ENCODE measurements at regions of chr12 and their contacts with region 1.

Region 1: DNA sequence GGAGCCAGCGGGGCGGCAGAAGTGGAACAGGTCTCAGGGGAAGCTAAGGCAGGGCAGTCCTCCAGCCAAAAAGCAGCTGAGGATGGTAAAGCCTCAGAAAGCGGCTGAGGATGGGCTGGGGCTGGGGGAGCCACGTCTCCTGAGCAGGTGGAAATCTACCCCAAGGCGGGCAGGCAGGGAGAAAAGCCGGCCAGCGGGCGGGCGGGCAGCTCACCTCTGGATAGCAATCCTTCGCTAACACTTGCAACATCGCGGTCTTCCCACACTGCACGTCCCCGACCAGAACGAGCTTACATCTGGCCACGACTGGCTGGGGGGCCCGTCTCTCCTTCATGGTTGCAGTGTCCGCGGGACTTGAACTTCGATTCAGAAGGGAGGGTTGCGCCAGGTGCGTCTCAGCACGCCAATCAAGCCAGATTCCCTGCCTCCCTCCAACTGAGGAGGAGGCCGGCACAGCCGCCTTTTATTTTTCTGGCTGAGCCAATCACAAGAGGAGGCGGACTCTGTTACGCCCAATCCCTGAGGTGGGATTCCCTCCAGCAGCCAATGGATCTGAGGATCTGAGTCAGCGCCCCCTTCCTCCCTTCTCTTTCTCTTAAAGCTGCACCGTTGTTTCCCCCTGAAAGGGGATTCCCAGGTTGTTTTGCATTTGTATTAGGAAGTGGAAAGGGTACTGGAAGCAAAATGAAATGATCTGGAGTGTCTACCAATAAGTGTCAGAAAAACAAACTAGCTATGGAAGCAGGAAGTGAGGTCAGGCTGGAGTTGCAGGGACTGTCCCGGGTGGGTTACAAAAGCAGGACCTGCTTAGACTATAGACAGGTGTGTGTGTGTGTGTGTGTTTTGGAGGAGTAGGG is at the start of gene RND1:
- DNase-seq: peak; percentile 88
- ATAC-seq: peak; percentile 98
- H3K4me3 Mint-ChIP-seq: peak within 1 kb of the TSS; percentile 81
- H3K27ac Mint-ChIP-seq: peak within 1 kb of the TSS; percentile 71
- H3K4me1 Mint-ChIP-seq: peaks cover 23% of the 10 kb centered on the region
- H3K27me3 Mint-ChIP-seq: peaks cover 25% of the 10 kb centered on the region
- total RNA-seq, gene RND1: 1.4 to 2.5 TPM

Region 2: DNA sequence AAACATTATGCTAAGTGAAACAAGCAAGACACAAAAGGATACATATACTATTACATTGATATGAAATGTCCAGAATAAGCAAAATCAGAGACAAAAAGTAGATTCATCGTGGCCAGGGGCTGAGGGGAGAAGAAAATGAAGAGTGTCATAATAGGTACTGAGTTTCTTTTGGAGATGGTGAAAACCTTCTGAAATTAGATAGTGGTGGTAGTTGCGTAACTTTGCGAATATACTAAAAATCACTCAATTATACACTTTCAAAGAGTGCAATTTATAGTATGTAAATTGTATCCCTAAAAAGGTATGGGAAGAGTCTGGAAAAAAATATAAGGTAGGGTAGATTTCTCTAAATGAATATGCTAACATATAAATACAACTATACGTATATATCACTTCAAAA is 205.8 kb before region 1 on chr12:
- CTCF ChIA-PET with region 1: no interaction called
- POLR2A ChIA-PET with region 1: no interaction called
- DNase-seq: no peak
- ATAC-seq: no peak
- H3K4me3 Mint-ChIP-seq: no peak overlapping the region
- H3K27ac Mint-ChIP-seq: no peak overlapping the region
- H3K4me1 Mint-ChIP-seq: no peaks in the 10 kb centered on the region
- H3K27me3 Mint-ChIP-seq: no peaks in the 10 kb centered on the region

Region 3: GRCh38 chr12:48882315-48882687 is 16.6 kb after region 1 on chr12:
- CTCF ChIA-PET with region 1: interaction called, 10 read pairs
- POLR2A ChIA-PET with region 1: no interaction called
- DNase-seq: no peak
- ATAC-seq: no peak
- H3K4me3 Mint-ChIP-seq: no peak overlapping the region
- H3K27ac Mint-ChIP-seq: no peak overlapping the region
- H3K4me1 Mint-ChIP-seq: peaks cover 7% of the 10 kb centered on the region
- H3K27me3 Mint-ChIP-seq: peaks cover 32% of the 10 kb centered on the region

Measured in activated CD8-positive, alpha-beta T cell treated with anti-CD3 and anti-CD28 coated beads, Interleukin-2, amount 10 ng/mL, durations not matched to agents 7 days and 5 days (primary cell).